CD8-positive, alpha-beta T cell (primary cell): ENCODE measurements at regions of chr6 and their contacts with region 1.

Region 1: DNA sequence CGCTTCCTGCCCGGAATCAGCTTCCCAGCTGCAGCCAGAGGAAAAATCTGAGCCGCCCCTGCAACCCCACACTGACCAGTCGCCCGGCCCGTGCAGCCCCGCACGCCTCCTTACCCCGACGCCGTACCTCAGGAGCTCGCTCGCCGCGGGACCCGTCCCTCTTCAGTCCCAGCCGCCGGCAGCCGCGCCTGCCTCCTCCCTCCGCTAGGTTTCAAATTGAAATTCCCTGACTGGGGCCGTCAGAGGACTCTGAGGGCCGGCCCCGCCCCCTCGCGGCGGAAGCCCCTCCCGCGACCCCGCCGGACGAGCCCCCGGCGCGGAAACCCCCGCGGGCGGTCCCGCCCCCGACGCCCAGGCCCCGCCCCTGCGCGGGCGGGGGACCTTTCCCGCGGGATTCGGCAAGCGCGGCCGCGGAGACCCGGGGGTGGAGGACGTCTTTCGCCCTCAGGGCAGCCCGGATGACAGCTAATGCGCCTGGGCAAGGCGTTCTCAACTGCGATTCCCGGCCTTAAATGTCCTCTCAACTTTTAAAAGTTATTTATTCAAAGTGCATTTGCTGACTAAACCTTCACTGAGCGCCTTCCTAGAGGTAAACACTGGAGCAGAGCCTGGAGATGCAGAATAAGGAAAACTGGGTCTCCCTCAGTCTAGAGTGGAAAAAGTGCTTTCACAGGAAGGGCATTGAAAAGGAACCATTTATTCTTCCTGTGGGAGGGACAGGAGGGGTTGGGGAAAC is at the start of gene EPB41L2:
- DNase-seq: peak; percentile 55 to 92 (median 79)
- ATAC-seq: peak; percentile 91
- H3K4me3 ChIP-seq: peak within 1 kb of the TSS; percentile 57 to 80
- H3K4me3 Mint-ChIP-seq: peak within 1 kb of the TSS; percentile 89
- H3K27ac ChIP-seq: peak within 1 kb of the TSS in 1 of 2 experiments; percentile 49
- H3K27ac Mint-ChIP-seq: peak within 1 kb of the TSS; percentile 76
- H3K4me1 ChIP-seq: peaks cover 10% of the 10 kb centered on the region
- H3K4me1 Mint-ChIP-seq: peaks cover 27% of the 10 kb centered on the region
- H3K27me3 ChIP-seq: no peaks in the 10 kb centered on the region
- H3K27me3 Mint-ChIP-seq: no peaks in the 10 kb centered on the region
- CTCF ChIP-seq: peak; percentile 18
- total RNA-seq, gene EPB41L2: 11.0 to 12.0 TPM

Region 2: GRCh38 chr6:131135244-131136020 is 72.2 kb after region 1 on chr6 and contains the start of gene AKAP7:
- CTCF ChIA-PET with region 1: no interaction called
- POLR2A ChIA-PET with region 1: no interaction called
- intact Hi-C with region 1: loop called in 1 of 2 experiments (anchors 1 kb)
- DNase-seq: peak; percentile 14 to 80 (median 51)
- ATAC-seq: peak; percentile 79
- H3K4me3 ChIP-seq: peak within 1 kb of the TSS; percentile 58 to 66
- H3K4me3 Mint-ChIP-seq: peak within 1 kb of the TSS; percentile 92
- H3K27ac ChIP-seq: peak within 1 kb of the TSS; percentile 58 to 68
- H3K27ac Mint-ChIP-seq: peak within 1 kb of the TSS; percentile 95
- H3K4me1 ChIP-seq: peaks cover 12% of the 10 kb centered on the region
- H3K4me1 Mint-ChIP-seq: peaks cover 36% of the 10 kb centered on the region
- H3K27me3 ChIP-seq: no peaks in the 10 kb centered on the region
- H3K27me3 Mint-ChIP-seq: no peaks in the 10 kb centered on the region
- CTCF ChIP-seq: no peak
- total RNA-seq, gene AKAP7: 11.7 to 14.4 TPM